Aorta (tissue), 5 donors: ENCODE measurements at regions of chr5 and their contacts with region 1.

Region 1: GRCh38 chr5:115625579-115626444 is at the start of gene TMED7:
- DNase-seq: peak; percentile 100
- ATAC-seq: peak; percentile 100
- H3K4me3 ChIP-seq: peak within 1 kb of the TSS; percentile 88 to 90
- H3K27ac ChIP-seq: peak within 1 kb of the TSS; percentile 77 to 81
- H3K4me1 ChIP-seq: peaks cover 1 to 18% of the 10 kb centered on the region in 2 donors
- H3K27me3 ChIP-seq: no peaks in the 10 kb centered on the region
- total RNA-seq, gene TMED7: 98.6 to 101 TPM

Region 2: GRCh38 chr5:115544436-115545350 is 81.1 kb before region 1 on chr5 and contains the start of gene FEM1C:
- intact Hi-C with region 1: loop called in 1 of 2 experiments (anchors 10 kb)
- DNase-seq: peak; percentile 98 to 100
- ATAC-seq: peak; percentile 99
- H3K4me3 ChIP-seq: peak within 1 kb of the TSS; percentile 65 to 99
- H3K27ac ChIP-seq: peak within 1 kb of the TSS; percentile 96 to 98
- H3K4me1 ChIP-seq: no peaks in the 10 kb centered on the region
- H3K27me3 ChIP-seq: no peaks in the 10 kb centered on the region
- total RNA-seq, gene FEM1C: 18.8 to 21.0 TPM

Region 3: GRCh38 chr5:115657881-115658233 is 32.0 kb after region 1 on chr5:
- intact Hi-C with region 1: no loop called
- DNase-seq: no peak
- ATAC-seq: no peak
- H3K4me3 ChIP-seq: no peak overlapping the region
- H3K27ac ChIP-seq: no peak overlapping the region
- H3K4me1 ChIP-seq: no peaks in the 10 kb centered on the region
- H3K27me3 ChIP-seq: no peaks in the 10 kb centered on the region

Region 4: GRCh38 chr5:115816226-115817081 is 190.6 kb after region 1 on chr5 and contains the start of gene CDO1:
- intact Hi-C with region 1: loop called in 1 of 2 experiments (anchors 5 kb)
- DNase-seq: peak; percentile 77 to 88
- ATAC-seq: peak; percentile 91
- H3K4me3 ChIP-seq: peak within 1 kb of the TSS; percentile 16 to 65
- H3K27ac ChIP-seq: peak within 1 kb of the TSS; percentile 62 to 80
- H3K4me1 ChIP-seq: peaks cover 0 to 6% of the 10 kb centered on the region in 2 donors
- H3K27me3 ChIP-seq: no peaks in the 10 kb centered on the region
- total RNA-seq, gene CDO1: 11.6 to 27.7 TPM